Caco-2 (cell line): ENCODE measurements at regions of chrX and their contacts with region 1.

Region 1: DNA sequence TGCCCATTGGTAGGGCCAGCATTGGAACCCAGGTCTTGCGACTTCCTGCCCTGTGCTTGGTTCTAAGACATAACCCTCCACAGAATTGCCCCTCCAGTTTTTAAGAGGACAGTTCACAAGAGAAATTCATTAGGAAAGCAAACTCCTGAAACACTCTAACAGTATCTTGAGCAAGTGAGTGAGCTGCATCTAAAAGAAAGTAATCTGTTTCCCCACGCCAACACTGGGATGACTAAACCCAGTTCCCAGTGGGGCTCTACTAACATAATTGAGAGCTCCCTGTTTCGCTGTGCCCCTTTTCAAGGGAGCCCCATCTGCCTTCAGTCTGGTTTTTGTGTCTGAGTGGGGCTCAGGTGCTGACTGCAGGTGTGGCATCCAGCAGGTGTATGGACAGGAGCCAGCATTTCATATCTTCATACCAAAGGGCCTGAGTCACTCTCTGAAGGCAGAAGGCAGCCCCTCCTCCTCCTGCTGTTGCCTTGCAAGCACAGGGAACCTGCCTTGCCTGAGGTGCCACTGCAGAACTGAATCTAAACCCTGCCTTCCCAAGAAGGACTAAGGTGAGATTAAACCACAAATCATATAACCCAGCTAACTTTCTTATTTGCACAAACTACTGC is 8.0 kb downstream of the AMOT start:
- DNase-seq: peak; percentile 71 to 79
- H3K4me3 ChIP-seq: no peak overlapping the region
- H3K4me3 Mint-ChIP-seq: peak overlapping the region; percentile 38
- H3K27ac Mint-ChIP-seq: peak overlapping the region; percentile 73
- H3K4me1 ChIP-seq: peaks cover 40% of the 10 kb centered on the region
- H3K4me1 Mint-ChIP-seq: peaks cover 11% of the 10 kb centered on the region
- H3K27me3 ChIP-seq: no peaks in the 10 kb centered on the region
- H3K27me3 Mint-ChIP-seq: no peaks in the 10 kb centered on the region
- CTCF ChIP-seq: no peak

Region 2: GRCh38 chrX:112784692-112785091 is 47.9 kb before region 1 on chrX:
- CTCF ChIA-PET with region 1: no interaction called
- POLR2A ChIA-PET with region 1: no interaction called
- intact Hi-C with region 1: loop called (anchors 2 kb)
- DNase-seq: no peak
- H3K4me3 ChIP-seq: no peak overlapping the region
- H3K4me3 Mint-ChIP-seq: no peak overlapping the region
- H3K27ac Mint-ChIP-seq: peak overlapping the region; percentile 50
- H3K4me1 ChIP-seq: peaks cover 20% of the 10 kb centered on the region
- H3K4me1 Mint-ChIP-seq: peaks cover 19% of the 10 kb centered on the region
- H3K27me3 ChIP-seq: no peaks in the 10 kb centered on the region
- H3K27me3 Mint-ChIP-seq: no peaks in the 10 kb centered on the region
- CTCF ChIP-seq: no peak

Region 3: GRCh38 chrX:112819010-112819640 is 13.5 kb before region 1 on chrX:
- CTCF ChIA-PET with region 1: no interaction called
- POLR2A ChIA-PET with region 1: no interaction called
- intact Hi-C with region 1: no loop called
- DNase-seq: no peak
- H3K4me3 ChIP-seq: no peak overlapping the region
- H3K4me3 Mint-ChIP-seq: no peak overlapping the region
- H3K27ac Mint-ChIP-seq: no peak overlapping the region
- H3K4me1 ChIP-seq: no peaks in the 10 kb centered on the region
- H3K4me1 Mint-ChIP-seq: no peaks in the 10 kb centered on the region
- H3K27me3 ChIP-seq: no peaks in the 10 kb centered on the region
- H3K27me3 Mint-ChIP-seq: no peaks in the 10 kb centered on the region
- CTCF ChIP-seq: no peak

Region 4: GRCh38 chrX:112967326-112967725 is 134.7 kb after region 1 on chrX:
- CTCF ChIA-PET with region 1: no interaction called
- POLR2A ChIA-PET with region 1: no interaction called
- intact Hi-C with region 1: loop called (anchors 10 kb)
- DNase-seq: peak; percentile 36 to 37
- H3K4me3 ChIP-seq: no peak overlapping the region
- H3K4me3 Mint-ChIP-seq: peak overlapping the region; percentile 28
- H3K27ac Mint-ChIP-seq: no peak overlapping the region
- H3K4me1 ChIP-seq: peaks cover 61% of the 10 kb centered on the region
- H3K4me1 Mint-ChIP-seq: no peaks in the 10 kb centered on the region
- H3K27me3 ChIP-seq: no peaks in the 10 kb centered on the region
- H3K27me3 Mint-ChIP-seq: no peaks in the 10 kb centered on the region
- CTCF ChIP-seq: no peak